WTC11 (cell line): ENCODE measurements at regions of chrX and their contacts with region 1.

Region 1: DNA sequence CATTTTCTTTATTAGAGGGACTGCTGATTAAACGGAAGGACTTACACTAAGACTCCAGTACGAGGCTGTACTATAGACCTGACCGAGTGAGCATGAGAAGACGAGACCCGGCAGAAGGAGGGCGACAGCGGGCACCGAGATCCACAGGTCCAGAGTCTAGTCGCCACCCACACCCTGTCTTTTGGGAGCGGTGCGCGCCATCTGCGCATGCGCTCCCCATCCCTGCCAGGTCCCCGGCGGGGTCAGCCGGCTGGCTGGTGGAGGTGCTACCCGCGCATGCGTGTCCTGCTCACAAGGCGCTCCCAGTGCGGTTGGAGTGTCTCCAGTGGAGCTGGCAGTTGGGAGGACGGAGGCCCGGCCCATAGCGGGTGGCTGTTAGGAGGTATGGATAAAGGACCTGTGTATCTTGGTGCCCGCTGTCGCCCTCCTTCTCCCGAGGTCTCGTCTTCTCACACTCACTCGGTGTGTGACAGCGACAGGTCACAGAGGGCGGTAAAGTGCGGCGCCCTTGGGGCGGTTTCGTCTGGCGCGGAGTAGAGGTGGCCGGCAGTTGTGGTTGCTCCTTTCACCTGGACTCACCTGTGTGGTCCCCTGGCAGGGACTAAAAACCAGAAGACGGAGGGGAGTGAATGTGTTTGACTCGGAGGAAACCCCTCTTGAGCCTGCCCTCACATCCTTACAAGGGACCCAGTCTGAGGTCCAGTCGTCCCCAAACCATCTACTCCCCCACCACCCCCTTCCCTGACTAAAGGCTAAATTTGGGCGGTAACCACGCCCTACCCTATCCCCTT is 7.6 kb upstream of the HSD17B10 start:
- DNase-seq: peak; percentile 82
- ATAC-seq: peak; percentile 91
- H3K4me3 Mint-ChIP-seq: peak overlapping the region; percentile 69
- H3K27ac Mint-ChIP-seq: no peak overlapping the region
- H3K4me1 Mint-ChIP-seq: peaks cover 4% of the 10 kb centered on the region
- H3K27me3 Mint-ChIP-seq: peaks cover 21% of the 10 kb centered on the region
- CTCF ChIP-seq: no peak

Region 2: GRCh38 chrX:53284684-53285447 is 156.9 kb before region 1 on chrX:
- CTCF ChIA-PET with region 1: interaction called, 11 read pairs
- POLR2A ChIA-PET with region 1: no interaction called
- DNase-seq: peak; percentile 69
- ATAC-seq: peak; percentile 66
- H3K4me3 Mint-ChIP-seq: no peak overlapping the region
- H3K27ac Mint-ChIP-seq: no peak overlapping the region
- H3K4me1 Mint-ChIP-seq: peaks cover 38% of the 10 kb centered on the region
- H3K27me3 Mint-ChIP-seq: no peaks in the 10 kb centered on the region
- CTCF ChIP-seq: peak; percentile 58

Region 3: DNA sequence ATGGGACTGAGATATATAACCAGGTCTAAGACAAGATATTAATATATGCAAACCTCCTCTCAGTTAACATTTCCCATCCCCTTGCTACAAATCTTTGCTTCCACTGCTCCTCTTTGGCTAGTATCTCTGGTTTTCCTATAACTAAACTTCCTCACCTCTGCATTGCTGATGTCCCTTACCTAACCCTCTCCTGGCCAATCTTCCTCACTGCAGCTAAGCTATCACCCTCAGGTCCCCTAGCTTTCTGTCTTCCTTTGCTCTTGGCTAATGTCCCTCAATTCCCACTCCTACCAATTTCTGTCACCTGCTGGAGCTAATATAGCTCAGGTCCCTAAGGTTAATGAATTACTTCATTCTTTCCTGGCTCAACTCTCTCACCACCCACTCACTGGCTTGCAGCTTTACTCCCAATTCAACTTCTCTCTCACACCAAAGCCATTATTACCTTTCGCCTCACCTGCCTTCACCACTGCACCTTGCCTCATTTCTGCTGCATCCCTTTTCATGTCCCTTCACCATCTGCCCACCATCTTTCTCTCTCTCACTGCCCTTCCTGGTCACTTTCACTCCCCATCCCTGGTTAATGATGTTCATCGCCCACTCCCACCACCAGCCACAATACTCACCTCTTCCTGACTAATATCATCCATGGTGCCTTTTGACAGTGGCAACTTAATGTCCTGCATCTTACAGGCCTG is 46.0 kb before region 1 on chrX:
- CTCF ChIA-PET with region 1: no interaction called
- POLR2A ChIA-PET with region 1: no interaction called
- DNase-seq: no peak
- ATAC-seq: no peak; the same call in 1 of the 2 replicates
- H3K4me3 Mint-ChIP-seq: no peak overlapping the region
- H3K27ac Mint-ChIP-seq: no peak overlapping the region
- H3K4me1 Mint-ChIP-seq: peaks cover 15% of the 10 kb centered on the region
- H3K27me3 Mint-ChIP-seq: no peaks in the 10 kb centered on the region
- CTCF ChIP-seq: no peak

Region 4: DNA sequence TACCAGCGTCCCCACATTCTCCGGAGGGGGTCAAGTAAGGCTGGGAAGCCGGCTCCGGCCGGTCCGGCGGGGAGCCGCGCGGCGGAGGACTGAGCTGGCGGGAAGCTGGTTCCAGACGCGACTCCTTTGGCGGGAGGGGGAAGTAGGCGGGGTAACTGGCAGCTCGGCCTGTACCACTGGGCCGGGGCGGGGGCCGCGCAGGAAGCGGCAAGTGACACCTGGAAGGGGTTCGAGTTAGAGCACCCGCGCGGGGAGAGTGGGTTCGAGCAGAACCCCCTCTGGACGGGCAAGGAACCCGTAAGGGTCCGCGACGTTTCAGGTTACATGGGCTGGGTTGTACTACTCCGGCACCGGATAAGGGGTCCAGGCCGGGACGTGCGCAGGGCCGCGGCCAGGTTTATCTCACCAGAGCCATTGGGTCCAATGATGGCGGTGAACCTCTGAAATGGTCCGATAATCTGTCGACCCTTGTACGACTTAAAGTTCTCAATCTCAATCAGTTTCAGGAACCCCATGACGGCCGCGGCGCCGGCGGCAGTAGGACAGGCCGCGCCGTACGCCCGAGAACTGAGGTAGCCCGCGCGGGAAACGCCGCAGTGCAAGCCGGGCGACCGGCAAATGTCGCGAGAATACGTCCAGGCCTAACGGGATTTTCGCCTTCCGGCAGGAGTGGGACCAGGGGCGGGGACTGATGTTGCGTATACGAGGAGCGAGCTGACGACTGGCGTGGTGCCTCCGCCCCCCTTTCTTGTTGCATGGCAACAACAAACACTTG is 19.5 kb before region 1 on chrX and contains the start of gene SMC1A:
- CTCF ChIA-PET with region 1: interaction called, 21 read pairs
- POLR2A ChIA-PET with region 1: interaction called, 7 read pairs
- DNase-seq: peak; percentile 95
- ATAC-seq: peak; percentile 91
- H3K4me3 Mint-ChIP-seq: peak within 1 kb of the TSS; percentile 96
- H3K27ac Mint-ChIP-seq: peak within 1 kb of the TSS; percentile 100
- H3K4me1 Mint-ChIP-seq: peaks cover 14% of the 10 kb centered on the region
- H3K27me3 Mint-ChIP-seq: no peaks in the 10 kb centered on the region
- CTCF ChIP-seq: no peak
- total RNA-seq, gene SMC1A: 87.4 to 98.7 TPM (median 89.3 TPM) in 3 replicates

Region 5: GRCh38 chrX:53458082-53458481 is 16.4 kb after region 1 on chrX:
- CTCF ChIA-PET with region 1: interaction called, 13 read pairs
- POLR2A ChIA-PET with region 1: interaction called, 3 read pairs
- DNase-seq: no peak
- ATAC-seq: no peak
- H3K4me3 Mint-ChIP-seq: no peak overlapping the region
- H3K27ac Mint-ChIP-seq: no peak overlapping the region
- H3K4me1 Mint-ChIP-seq: no peaks in the 10 kb centered on the region
- H3K27me3 Mint-ChIP-seq: peaks cover under 1% of the 10 kb centered on the region
- CTCF ChIP-seq: no peak